ENCODE measurements at regions of chr13 and their contacts with region 1.

Region 1: GRCh38 chr13:36919833-36920615 is at the start of gene SMAD9:
- DNase-seq: peak; percentile 85
- H3K4me3 ChIP-seq: peak within 1 kb of the TSS; percentile 79
- H3K27ac ChIP-seq: peak within 1 kb of the TSS; percentile 74
- H3K4me1 ChIP-seq: peaks cover 47% of the 10 kb centered on the region
- H3K27me3 ChIP-seq: no peaks in the 10 kb centered on the region
- CTCF ChIP-seq: no peak
- total RNA-seq, gene SMAD9: 23.3 and 24.6 TPM in 2 replicates

Region 2: DNA sequence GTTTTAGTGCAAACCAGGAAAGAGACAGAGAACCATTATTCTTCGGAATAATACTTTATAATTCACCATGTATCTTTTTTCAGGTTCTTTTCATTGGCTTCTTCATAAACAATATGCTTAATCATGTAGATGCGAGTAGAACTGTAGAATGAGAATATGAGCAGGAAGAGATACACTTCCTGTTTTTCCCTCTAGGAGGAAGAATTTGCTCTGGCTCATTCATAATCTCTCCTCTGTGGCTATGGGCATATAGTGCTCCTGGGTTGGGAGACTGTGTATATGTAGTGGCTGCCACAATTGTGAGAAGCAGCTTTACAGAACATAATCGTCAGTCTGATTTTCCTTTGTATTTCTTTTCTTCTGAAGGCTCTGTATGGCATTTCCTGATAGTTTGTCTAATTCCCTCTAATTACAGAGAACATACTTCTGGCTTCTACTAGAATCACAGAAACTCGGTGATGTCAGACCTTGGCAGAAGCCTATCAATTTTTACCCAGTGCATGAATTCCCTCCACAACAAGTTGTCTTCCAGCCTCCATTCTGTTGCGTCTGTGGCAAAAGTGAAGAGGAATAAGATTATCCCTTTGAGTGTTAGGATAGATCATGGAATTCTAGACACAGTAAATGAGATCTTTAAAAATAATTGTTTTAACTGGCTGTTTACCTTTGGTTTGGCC is 785.9 kb before region 1 on chr13:
- CTCF ChIA-PET with region 1: no interaction called
- POLR2A ChIA-PET with region 1: no interaction called
- intact Hi-C with region 1: no loop called
- DNase-seq: peak; percentile 68
- H3K4me3 ChIP-seq: no peak overlapping the region
- H3K27ac ChIP-seq: no peak overlapping the region
- H3K4me1 ChIP-seq: peaks cover 20% of the 10 kb centered on the region
- H3K27me3 ChIP-seq: peaks cover 12% of the 10 kb centered on the region
- CTCF ChIP-seq: peak; percentile 50

Region 3: GRCh38 chr13:36858290-36858689 is 61.7 kb before region 1 on chr13:
- CTCF ChIA-PET with region 1: no interaction called
- POLR2A ChIA-PET with region 1: no interaction called
- intact Hi-C with region 1: loop called (anchors 5 kb)
- DNase-seq: peak; percentile 83
- H3K4me3 ChIP-seq: no peak overlapping the region
- H3K27ac ChIP-seq: no peak overlapping the region
- H3K4me1 ChIP-seq: no peaks in the 10 kb centered on the region
- H3K27me3 ChIP-seq: no peaks in the 10 kb centered on the region
- CTCF ChIP-seq: peak; percentile 67

Region 4: GRCh38 chr13:36986462-36987240 is 66.6 kb after region 1 on chr13:
- CTCF ChIA-PET with region 1: no interaction called
- POLR2A ChIA-PET with region 1: interaction called, 22 read pairs
- intact Hi-C with region 1: no loop called
- DNase-seq: no peak
- H3K4me3 ChIP-seq: no peak overlapping the region
- H3K27ac ChIP-seq: no peak overlapping the region
- H3K4me1 ChIP-seq: peaks cover 7% of the 10 kb centered on the region
- H3K27me3 ChIP-seq: no peaks in the 10 kb centered on the region
- CTCF ChIP-seq: no peak

Measured in A673 (cell line).